ENCODE measurements at regions of chr3 and their contacts with region 1.

Region 1: GRCh38 chr3:99686955-99687612 is 48.7 kb downstream of the COL8A1 start:
- DNase-seq: peak; percentile 72
- ATAC-seq: peak; percentile 38 to 49

Region 2: DNA sequence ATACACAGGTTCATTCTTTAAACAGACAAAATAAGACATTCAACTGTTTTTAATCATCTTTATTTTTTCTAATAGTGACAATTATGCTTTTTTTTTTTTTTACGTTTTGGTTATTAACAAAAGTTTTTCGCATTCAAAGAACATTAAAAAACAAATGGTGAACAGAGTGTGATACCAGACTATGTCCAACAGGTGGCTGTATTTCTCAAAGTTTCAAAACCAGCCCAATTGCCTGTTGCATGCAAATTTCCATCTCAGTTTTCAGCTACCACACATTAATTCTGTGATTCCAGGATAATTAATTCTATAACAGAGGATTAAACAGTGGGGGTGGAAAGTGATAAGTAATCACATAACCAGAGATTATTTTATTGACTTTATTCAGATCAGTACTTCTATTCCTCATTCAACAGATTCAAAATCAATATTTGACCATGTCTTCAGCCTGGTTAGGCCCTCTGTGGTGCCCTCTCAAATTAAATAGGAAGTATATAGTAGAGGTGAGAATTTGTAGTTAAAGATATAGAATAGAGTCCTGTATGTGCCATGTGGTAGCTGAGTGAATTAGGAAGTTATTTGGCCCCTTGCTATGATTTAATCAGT is 663.4 kb before region 1 on chr3:
- intact Hi-C with region 1: loop called in 1 of 2 experiments (anchors 5 kb)
- DNase-seq: no peak
- ATAC-seq: no peak

Region 3: GRCh38 chr3:99439892-99440291 is 247.2 kb before region 1 on chr3:
- intact Hi-C with region 1: no loop called
- DNase-seq: no peak
- ATAC-seq: peak in 1 of 2 donors; percentile 45

Region 4: DNA sequence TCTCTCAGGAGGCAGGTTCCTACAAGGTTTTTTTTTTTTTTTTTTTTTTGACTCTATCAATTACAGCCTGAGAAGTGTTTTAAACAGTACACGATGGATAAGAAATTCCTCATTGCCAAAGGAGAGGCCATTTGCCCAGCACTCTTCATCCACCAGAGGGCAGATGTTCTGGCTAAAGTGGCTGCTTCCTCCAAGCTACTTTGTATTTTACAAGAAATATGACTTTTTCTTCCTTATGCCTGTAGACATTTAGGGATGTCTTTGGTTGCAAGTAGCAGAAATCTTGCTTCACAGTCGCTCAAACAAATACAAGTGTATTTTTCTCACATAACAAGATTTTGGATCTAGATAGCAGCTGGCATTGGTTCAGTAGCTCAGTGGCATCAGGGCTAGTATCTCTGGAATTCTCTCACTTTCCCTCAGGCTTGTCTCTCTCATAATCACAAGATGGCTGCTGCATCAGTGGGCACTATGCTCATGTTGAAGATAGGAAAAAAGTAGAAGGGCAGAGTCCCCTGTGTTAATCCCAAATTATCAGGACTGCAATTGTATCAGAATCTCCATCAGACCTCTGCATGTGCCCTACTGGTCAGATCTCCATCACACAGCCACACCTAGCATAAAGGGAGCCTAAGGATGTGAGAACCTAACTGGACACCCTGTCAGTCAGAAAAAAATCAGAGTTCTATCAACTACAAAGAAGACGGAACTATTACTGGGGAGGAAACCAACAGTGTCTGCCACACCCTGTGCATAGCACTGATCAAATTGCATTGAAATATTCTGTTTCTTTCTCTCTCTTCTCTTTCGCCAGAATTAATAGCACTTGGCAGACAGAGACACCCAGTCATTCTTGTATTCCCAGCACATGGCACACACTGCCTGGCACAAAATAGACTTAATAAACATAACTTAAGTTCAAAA is 187.6 kb before region 1 on chr3:
- intact Hi-C with region 1: loop called in 1 of 2 experiments (anchors 5 kb)
- DNase-seq: peak; percentile 40
- ATAC-seq: peak; percentile 62 to 75

Region 5: GRCh38 chr3:99645277-99646106 is 41.6 kb before region 1 on chr3:
- intact Hi-C with region 1: loop called in 1 of 2 experiments (anchors 5 kb)
- DNase-seq: no peak
- ATAC-seq: peak; percentile 8 to 35

Region 6: GRCh38 chr3:99753268-99753975 is 66.3 kb after region 1 on chr3:
- intact Hi-C with region 1: no loop called
- DNase-seq: no peak
- ATAC-seq: peak; percentile 83 to 86

Region 7: GRCh38 chr3:99884484-99884883 is 197.4 kb after region 1 on chr3:
- intact Hi-C with region 1: no loop called
- DNase-seq: no peak
- ATAC-seq: no peak

Region 8: GRCh38 chr3:100020876-100021644 is 334.0 kb after region 1 on chr3:
- intact Hi-C with region 1: no loop called
- DNase-seq: no peak
- ATAC-seq: peak in 1 of 2 donors; percentile 19

Measured in left cardiac atrium (tissue), 4 donors.